ENCODE measurements at regions of chr14 and their contacts with region 1.

Region 1: GRCh38 chr14:101707068-101707842 is 54.3 kb upstream of the PPP2R5C start:
- DNase-seq: peak in 4 of 5 donors; percentile 40 to 59 (median 55)
- ATAC-seq: peak; percentile 29 to 73 (median 54)
- H3K4me3 ChIP-seq: peak overlapping the region in 1 of 12 donors; percentile 8
- H3K27ac ChIP-seq: peak overlapping the region in 10 of 12 donors; percentile 51 to 89 (median 82)
- H3K4me1 ChIP-seq: peaks cover 0 to 28% (median 20%) of the 10 kb centered on the region in 12 donors
- H3K27me3 ChIP-seq: peaks cover 0 to 11% (median 0%) of the 10 kb centered on the region in 9 donors
- CTCF ChIP-seq: peak; percentile 64 to 91 (median 88)
- POLR2A ChIP-seq: no peak

Region 2: GRCh38 chr14:101525640-101526527 is 181.4 kb before region 1 on chr14:
- intact Hi-C with region 1: no loop called
- DNase-seq: no peak
- ATAC-seq: peak in 1 of 4 donors; percentile 41
- H3K4me3 ChIP-seq: no peak overlapping the region
- H3K27ac ChIP-seq: no peak overlapping the region
- H3K4me1 ChIP-seq: no peaks in the 10 kb centered on the region
- H3K27me3 ChIP-seq: peaks cover 0 to 6% (median 0%) of the 10 kb centered on the region in 9 donors
- CTCF ChIP-seq: no peak
- POLR2A ChIP-seq: no peak

Region 3: GRCh38 chr14:101761032-101761880 is 54.0 kb after region 1 on chr14 and contains the start of gene PPP2R5C:
- intact Hi-C with region 1: loop called in 7 of 10 experiments (anchors 2 to 5 kb)
- DNase-seq: peak; percentile 94 to 97 (median 95)
- ATAC-seq: peak; percentile 73 to 89 (median 88)
- H3K4me3 ChIP-seq: peak within 1 kb of the TSS; percentile 65 to 100 (median 98)
- H3K27ac ChIP-seq: peak within 1 kb of the TSS; percentile 46 to 99 (median 95)
- H3K4me1 ChIP-seq: peaks cover 0 to 30% (median 11%) of the 10 kb centered on the region in 12 donors
- H3K27me3 ChIP-seq: no peaks in the 10 kb centered on the region
- CTCF ChIP-seq: no peak
- POLR2A ChIP-seq: peak in 1 of 2 donors; percentile 71
- total RNA-seq, gene PPP2R5C: 116 to 248 (median 207) TPM

Region 4: GRCh38 chr14:101809671-101810514 is 102.6 kb after region 1 on chr14:
- intact Hi-C with region 1: no loop called
- DNase-seq: peak; percentile 84 to 90 (median 90)
- ATAC-seq: peak; percentile 92 to 96 (median 94)
- H3K4me3 ChIP-seq: peak overlapping the region; percentile 32 to 84 (median 65)
- H3K27ac ChIP-seq: peak overlapping the region; percentile 92 to 99 (median 97)
- H3K4me1 ChIP-seq: peaks cover 7 to 59% (median 46%) of the 10 kb centered on the region in 12 donors
- H3K27me3 ChIP-seq: no peaks in the 10 kb centered on the region
- CTCF ChIP-seq: no peak
- POLR2A ChIP-seq: peak; percentile 9 to 56

Region 5: DNA sequence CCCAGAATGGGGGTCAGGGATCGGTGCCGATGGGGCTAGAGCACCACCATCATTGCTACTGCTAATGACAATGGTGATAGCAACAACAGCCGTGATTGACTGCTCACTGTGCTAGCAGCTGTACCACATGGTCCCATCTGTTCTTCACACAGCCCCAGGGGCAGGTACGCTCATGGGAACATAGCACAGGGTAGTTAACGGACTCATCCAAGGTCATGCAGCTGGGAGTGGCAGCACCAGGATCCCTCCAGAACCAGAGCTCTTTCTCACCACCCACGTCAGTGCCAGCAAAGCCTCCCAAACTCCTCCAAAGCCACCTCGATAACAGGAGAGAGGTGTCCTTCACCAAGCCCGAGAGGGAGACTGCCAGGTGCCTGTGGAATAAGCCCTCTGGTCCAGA is 245.9 kb after region 1 on chr14:
- intact Hi-C with region 1: loop called in 2 of 10 experiments (anchors 10 kb)
- DNase-seq: no peak
- ATAC-seq: no peak
- H3K4me3 ChIP-seq: no peak overlapping the region
- H3K27ac ChIP-seq: no peak overlapping the region
- H3K4me1 ChIP-seq: peaks cover 0 to 22% (median 12%) of the 10 kb centered on the region in 12 donors
- H3K27me3 ChIP-seq: no peaks in the 10 kb centered on the region
- CTCF ChIP-seq: no peak
- POLR2A ChIP-seq: no peak

Region 6: GRCh38 chr14:101992708-101993107 is 285.5 kb after region 1 on chr14:
- intact Hi-C with region 1: loop called in 1 of 10 experiments (anchors 5 kb)
- DNase-seq: no peak
- ATAC-seq: peak; percentile 45 to 83 (median 76)
- H3K4me3 ChIP-seq: no peak overlapping the region
- H3K27ac ChIP-seq: no peak overlapping the region
- H3K4me1 ChIP-seq: peaks cover 0 to 5% (median 0%) of the 10 kb centered on the region in 12 donors
- H3K27me3 ChIP-seq: no peaks in the 10 kb centered on the region
- CTCF ChIP-seq: no peak
- POLR2A ChIP-seq: no peak

Region 7: DNA sequence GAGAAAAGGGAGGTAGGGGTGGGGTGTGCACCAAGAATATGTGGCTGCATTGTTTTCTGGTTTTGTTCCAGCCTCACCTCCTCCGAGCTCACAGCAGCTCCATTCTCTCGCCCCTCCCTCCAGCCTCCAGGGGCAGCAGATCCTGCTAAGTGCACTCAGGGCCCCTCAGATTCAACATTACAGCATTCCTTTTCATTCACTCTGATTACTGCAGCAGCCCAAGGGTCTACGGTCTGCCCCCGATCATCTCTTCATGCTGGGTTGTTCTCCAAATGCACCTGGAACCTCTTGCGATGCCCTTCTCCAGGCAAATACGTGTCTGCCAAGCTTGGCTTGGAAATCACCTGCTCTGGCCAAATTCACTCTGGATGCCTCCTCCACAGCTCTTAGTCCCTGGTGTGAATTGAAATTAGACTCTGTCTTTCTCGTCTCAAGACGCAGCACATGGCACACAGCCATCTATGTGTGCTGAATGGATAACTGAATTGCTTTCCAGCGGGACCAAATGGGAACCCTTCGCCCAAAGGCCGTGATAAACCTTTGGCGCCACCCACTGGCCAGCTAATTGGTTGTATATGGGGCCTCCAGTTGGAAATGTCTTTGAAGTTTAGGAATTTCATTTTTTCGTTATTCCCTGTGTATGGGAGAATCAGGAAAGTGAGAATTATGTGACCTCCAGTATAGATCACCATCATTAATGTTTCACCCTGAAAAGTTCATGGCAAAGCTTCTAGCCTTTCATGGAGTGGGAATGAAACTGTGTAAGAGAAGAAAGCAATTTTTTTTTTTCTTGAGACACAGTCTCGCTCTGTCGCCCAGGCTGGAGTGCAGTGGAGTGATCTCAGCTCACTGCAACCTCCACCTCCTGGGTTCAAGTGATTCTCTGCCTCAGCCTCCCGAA is 389.2 kb after region 1 on chr14:
- intact Hi-C with region 1: loop called in 6 of 10 experiments (anchors 2 to 10 kb)
- DNase-seq: peak; percentile 83 to 91 (median 87)
- ATAC-seq: peak; percentile 81 to 91 (median 86)
- H3K4me3 ChIP-seq: no peak overlapping the region
- H3K27ac ChIP-seq: no peak overlapping the region
- H3K4me1 ChIP-seq: peaks cover 0 to 9% (median 0%) of the 10 kb centered on the region in 12 donors
- H3K27me3 ChIP-seq: no peaks in the 10 kb centered on the region
- CTCF ChIP-seq: peak; percentile 69 to 91 (median 83)
- POLR2A ChIP-seq: no peak

Measured in heart left ventricle (tissue), 16 donors.